Activated CD4-positive, alpha-beta T cell treated with anti-CD3 and anti-CD28 coated beads, Interleukin-2, amount 10 ng/mL, durations not matched to agents 7 days and 5 days (primary cell): ENCODE measurements at regions of chr1 and their contacts with region 1.

Region 1: GRCh38 chr1:156898161-156898566 is 4.6 kb downstream of the PEAR1 start:
- DNase-seq: no peak
- H3K4me3 Mint-ChIP-seq: no peak overlapping the region
- H3K27ac Mint-ChIP-seq: no peak overlapping the region
- H3K4me1 Mint-ChIP-seq: peaks cover 18% of the 10 kb centered on the region
- H3K27me3 Mint-ChIP-seq: peaks cover 27% of the 10 kb centered on the region

Region 2: DNA sequence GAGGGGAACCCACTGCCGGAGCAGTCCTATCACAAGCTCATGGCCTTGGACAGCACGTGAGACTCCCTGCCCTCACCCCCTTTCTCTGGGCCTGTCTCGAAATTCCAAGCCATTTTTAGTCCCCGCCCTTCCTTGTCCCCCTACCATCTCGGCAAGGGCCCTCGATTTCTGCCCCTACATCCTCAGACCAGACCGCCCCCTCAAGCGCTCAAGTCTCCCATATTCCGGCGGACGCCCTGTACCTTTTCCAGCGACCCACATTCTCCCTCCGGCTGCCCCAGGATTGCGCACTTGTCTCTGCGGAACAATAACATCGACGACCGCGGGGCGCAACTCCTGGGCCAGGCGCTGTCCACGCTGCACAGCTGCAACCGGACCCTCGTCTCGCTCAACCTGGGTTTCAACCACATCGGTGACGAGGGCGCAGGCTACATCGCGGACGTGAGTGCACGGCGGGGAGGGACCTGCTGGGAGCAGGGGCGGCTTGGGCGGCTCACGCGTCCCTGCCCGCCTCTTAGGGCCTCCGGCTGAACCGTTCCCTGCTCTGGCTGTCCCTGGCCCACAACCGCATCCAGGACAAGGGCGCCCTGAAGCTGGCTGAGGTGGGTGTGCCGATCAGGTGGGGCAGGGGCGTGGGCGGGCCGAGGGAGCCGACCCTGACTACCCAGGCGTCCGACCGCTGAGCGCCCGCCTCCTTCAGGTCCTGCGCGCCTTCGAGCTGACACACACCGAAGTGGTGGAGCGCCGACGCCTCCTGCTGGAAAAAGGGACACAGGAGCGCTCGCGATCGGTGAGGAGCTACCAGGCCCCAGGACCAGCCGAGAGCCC is 29.3 kb after region 1 on chr1:
- CTCF ChIA-PET with region 1: interaction called, 10 read pairs
- POLR2A ChIA-PET with region 1: no interaction called
- DNase-seq: peak; percentile 78
- H3K4me3 Mint-ChIP-seq: peak overlapping the region; percentile 12
- H3K27ac Mint-ChIP-seq: no peak overlapping the region
- H3K4me1 Mint-ChIP-seq: peaks cover 32% of the 10 kb centered on the region
- H3K27me3 Mint-ChIP-seq: peaks cover 74% of the 10 kb centered on the region